Activated CD4-positive, alpha-beta T cell treated with anti-CD3 and anti-CD28 coated beads for 36 hours (primary cell): ENCODE measurements at regions of chr3 and their contacts with region 1.

Region 1: GRCh38 chr3:114418724-114419543 is 125.1 kb downstream of the TIGIT start:
- DNase-seq: no peak
- ATAC-seq: peak; percentile 70
- H3K4me3 Mint-ChIP-seq: peak overlapping the region; percentile 29
- H3K27ac Mint-ChIP-seq: peak overlapping the region; percentile 79
- H3K4me1 Mint-ChIP-seq: peaks cover 35% of the 10 kb centered on the region
- H3K27me3 Mint-ChIP-seq: no peaks in the 10 kb centered on the region

Region 2: GRCh38 chr3:113575206-113575605 is 843.7 kb before region 1 on chr3:
- CTCF ChIA-PET with region 1: no interaction called
- POLR2A ChIA-PET with region 1: no interaction called
- intact Hi-C with region 1: no loop called
- DNase-seq: no peak
- ATAC-seq: no peak
- H3K4me3 Mint-ChIP-seq: no peak overlapping the region
- H3K27ac Mint-ChIP-seq: no peak overlapping the region
- H3K4me1 Mint-ChIP-seq: peaks cover 8% of the 10 kb centered on the region
- H3K27me3 Mint-ChIP-seq: no peaks in the 10 kb centered on the region

Region 3: DNA sequence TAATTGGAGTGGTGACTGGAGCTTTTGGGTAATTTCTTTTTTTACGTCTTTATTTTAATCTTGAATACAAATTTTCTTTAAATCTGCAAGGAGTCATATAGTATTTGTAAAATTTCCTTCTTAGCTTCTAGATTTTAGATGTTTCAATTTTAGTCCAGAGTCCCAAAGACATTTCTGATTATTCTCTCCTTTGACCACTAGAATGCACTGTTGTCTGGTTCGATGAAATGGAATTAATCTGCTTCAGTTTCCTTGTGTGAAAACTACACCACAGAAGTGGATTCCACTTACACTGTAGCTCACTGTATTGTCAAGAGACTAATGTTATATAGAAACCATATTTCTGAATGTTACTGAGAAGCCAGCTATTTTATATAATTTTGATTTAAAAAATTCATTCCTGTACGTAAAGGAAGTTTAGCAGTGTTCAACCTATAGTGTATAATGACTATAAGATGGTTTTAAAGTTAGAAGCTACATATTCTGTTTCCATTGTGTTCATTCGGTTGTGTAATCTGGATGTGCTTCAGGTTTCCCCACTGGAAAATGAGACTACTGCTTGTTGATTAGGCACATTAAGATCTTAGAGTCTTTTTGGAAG is 574.2 kb before region 1 on chr3:
- CTCF ChIA-PET with region 1: no interaction called
- POLR2A ChIA-PET with region 1: no interaction called
- intact Hi-C with region 1: loop called in 1 of 2 experiments (anchors 10 kb)
- DNase-seq: no peak
- ATAC-seq: no peak
- H3K4me3 Mint-ChIP-seq: no peak overlapping the region
- H3K27ac Mint-ChIP-seq: no peak overlapping the region
- H3K4me1 Mint-ChIP-seq: no peaks in the 10 kb centered on the region
- H3K27me3 Mint-ChIP-seq: no peaks in the 10 kb centered on the region

Region 4: DNA sequence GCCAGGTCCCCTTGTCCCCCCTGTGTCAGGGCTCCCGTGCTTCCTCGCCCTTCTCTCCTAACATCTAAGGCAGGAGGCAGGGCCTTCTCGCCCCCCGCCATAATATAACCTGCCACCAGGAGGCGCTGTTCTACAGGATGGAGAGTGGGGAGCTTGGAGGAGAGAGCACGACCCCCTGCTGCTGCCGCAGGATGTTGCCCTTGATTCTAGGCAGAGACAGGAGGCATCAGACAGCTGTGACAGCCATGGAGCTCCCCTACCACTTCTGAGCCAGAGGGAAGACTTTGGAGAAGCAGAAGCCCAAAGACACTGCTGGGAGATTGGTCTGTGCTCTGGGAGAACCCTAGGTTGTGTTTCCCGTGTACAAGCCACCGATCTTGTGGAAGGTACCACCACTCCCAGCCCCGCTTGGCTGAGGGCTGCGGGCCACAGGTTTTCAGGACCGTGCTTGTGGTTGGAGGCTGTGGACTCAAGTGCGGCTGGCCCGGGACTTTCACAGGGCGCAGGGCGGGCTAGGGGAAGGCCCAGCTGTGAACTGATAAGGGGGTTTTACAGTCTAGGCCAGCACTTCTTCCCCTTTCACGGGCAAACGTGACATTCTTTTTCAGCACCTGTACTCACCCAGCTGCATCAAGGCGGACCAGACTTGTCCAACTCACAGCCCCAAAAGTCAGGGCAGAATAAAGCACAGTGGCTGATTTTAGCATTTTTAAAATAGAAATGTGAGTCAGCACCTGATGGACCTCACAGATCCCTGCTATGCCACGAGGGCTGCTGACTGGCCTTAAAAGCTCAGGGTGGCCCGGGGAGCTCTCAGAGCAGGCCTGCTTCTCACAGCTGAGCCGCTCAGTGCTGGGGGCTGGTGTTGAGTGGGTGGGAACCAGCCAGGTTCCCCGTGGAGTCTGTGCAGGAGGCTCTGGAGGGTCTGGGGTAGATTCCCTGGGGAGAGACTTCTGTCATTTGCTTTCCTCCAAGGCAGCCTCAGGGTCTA is 127.7 kb before region 1 on chr3:
- CTCF ChIA-PET with region 1: interaction called, 20 read pairs
- POLR2A ChIA-PET with region 1: interaction called, 3 read pairs
- intact Hi-C with region 1: loop called (anchors 1 kb)
- DNase-seq: peak; percentile 94
- ATAC-seq: peak; percentile 76
- H3K4me3 Mint-ChIP-seq: peak overlapping the region; percentile 51
- H3K27ac Mint-ChIP-seq: peak overlapping the region; percentile 91
- H3K4me1 Mint-ChIP-seq: peaks cover 34% of the 10 kb centered on the region
- H3K27me3 Mint-ChIP-seq: no peaks in the 10 kb centered on the region

Region 5: GRCh38 chr3:114383875-114384557 is 34.9 kb before region 1 on chr3:
- CTCF ChIA-PET with region 1: interaction called, 89 read pairs
- POLR2A ChIA-PET with region 1: no interaction called
- intact Hi-C with region 1: loop called (anchors 1 kb)
- DNase-seq: peak; percentile 83
- ATAC-seq: peak; percentile 93
- H3K4me3 Mint-ChIP-seq: peak overlapping the region; percentile 53
- H3K27ac Mint-ChIP-seq: peak overlapping the region; percentile 84
- H3K4me1 Mint-ChIP-seq: peaks cover 11% of the 10 kb centered on the region
- H3K27me3 Mint-ChIP-seq: no peaks in the 10 kb centered on the region

Region 6: GRCh38 chr3:114432310-114432709 is 13.4 kb after region 1 on chr3:
- CTCF ChIA-PET with region 1: interaction called, 15 read pairs
- POLR2A ChIA-PET with region 1: no interaction called
- intact Hi-C with region 1: no loop called
- DNase-seq: no peak
- ATAC-seq: no peak
- H3K4me3 Mint-ChIP-seq: no peak overlapping the region
- H3K27ac Mint-ChIP-seq: no peak overlapping the region
- H3K4me1 Mint-ChIP-seq: no peaks in the 10 kb centered on the region
- H3K27me3 Mint-ChIP-seq: no peaks in the 10 kb centered on the region

Region 7: DNA sequence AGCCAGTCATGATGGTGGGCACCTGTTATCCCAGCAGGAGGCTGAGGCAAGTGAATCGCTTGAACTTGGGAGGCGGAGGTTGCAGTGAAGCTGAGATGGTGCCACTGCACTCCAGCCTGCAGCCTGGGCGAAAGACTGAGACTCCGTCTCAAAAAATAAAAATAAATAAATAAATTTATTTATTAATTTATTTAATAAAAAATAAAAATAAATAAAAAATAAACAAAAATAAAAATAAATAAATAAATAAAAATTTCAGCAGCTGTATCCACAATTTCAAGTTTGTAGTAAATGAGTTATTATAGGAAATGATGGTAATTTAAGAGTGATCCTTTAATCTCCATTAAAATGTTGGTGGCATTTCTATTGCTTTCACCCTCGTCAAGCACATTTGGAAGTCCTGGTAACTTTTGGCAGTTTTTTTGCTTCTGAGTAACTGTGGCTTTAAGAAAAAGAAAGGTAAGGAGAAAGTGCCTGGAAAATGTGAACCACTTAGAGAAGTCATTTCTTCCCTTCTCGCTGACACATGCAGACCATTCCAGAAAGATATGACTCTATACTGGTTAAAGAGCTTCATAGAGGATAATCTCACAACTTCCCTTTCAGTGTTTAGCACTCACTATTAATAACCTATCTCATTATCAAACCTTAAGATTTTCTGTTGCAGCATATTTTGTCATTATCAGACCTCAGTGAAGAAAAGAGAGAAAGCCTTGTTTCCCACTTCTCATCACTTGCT is 171.5 kb after region 1 on chr3:
- CTCF ChIA-PET with region 1: no interaction called
- POLR2A ChIA-PET with region 1: no interaction called
- intact Hi-C with region 1: loop called in 1 of 2 experiments (anchors 1 kb)
- DNase-seq: peak; percentile 7
- ATAC-seq: peak; percentile 83
- H3K4me3 Mint-ChIP-seq: no peak overlapping the region
- H3K27ac Mint-ChIP-seq: no peak overlapping the region
- H3K4me1 Mint-ChIP-seq: peaks cover 7% of the 10 kb centered on the region
- H3K27me3 Mint-ChIP-seq: no peaks in the 10 kb centered on the region

Region 8: DNA sequence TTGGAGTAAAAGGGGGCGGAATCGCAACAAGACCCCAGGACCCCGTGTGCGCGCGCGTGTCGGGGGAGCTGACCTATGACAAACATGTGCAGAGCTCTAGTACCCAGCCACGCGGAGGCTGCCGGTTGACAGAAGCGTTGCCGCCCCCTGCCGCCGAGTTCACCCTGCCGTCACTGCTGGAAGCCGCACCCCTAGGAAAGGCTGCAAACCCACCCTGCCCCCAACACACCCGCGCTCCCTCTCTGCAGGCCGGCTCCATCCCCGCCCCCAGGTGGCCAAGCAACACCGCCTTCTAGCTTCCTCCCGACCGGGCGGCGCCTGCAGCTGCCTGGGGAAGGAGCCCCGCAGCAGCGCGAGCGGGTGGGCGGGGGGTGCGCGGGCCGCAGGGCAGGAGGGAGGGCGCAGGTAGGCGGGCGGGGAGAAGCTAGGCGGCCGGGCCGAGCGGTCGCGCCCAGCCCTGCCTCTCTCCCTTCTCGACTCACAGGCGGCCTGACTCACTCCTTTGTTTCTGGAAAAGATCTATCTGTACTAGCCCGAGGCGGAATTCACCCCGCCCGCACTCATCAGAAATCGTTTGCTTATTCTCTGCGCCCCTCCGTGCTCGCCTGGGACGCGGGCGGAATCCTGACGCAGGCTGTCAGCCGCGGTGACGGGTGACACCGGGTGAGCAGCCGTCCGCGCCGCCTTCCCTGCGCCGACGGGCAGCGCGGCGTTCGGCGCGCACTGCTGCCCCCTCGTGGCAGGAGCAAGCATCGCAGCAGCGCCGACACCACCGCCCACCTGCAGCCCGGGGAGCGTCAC is 1365.2 kb after region 1 on chr3:
- CTCF ChIA-PET with region 1: no interaction called
- POLR2A ChIA-PET with region 1: no interaction called
- intact Hi-C with region 1: loop called in 1 of 2 experiments (anchors 10 kb)
- DNase-seq: peak; percentile 94
- ATAC-seq: peak; percentile 91
- H3K4me3 Mint-ChIP-seq: peak overlapping the region; percentile 81
- H3K27ac Mint-ChIP-seq: peak overlapping the region; percentile 97
- H3K4me1 Mint-ChIP-seq: peaks cover 18% of the 10 kb centered on the region
- H3K27me3 Mint-ChIP-seq: no peaks in the 10 kb centered on the region